IMR-90 (cell line): ENCODE measurements at regions of chr6 and their contacts with region 1.

Region 1: DNA sequence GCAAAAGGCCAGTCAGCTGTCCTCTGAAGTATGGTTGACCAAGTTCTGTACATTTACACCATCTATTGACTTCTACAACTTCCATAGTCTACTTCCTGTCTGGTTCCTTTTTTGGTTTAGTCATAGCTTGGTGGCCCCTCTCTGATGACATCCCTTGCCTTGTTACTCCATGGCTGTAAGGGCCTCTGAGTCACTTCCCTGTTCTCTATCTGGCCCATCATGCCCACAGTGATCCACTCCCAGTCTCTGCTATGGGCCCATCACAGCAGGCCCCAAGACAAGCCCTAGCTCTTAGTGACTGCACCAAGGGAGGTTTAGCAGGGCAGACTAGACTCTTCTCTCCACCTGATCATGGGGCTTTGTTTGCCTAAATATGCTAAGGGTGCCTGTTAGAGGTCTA is 441.6 kb downstream of the HACE1 start:
- DNase-seq: no peak
- ATAC-seq: no peak
- H3K4me3 ChIP-seq: no peak overlapping the region
- H3K27ac ChIP-seq: no peak overlapping the region
- H3K4me1 ChIP-seq: no peaks in the 10 kb centered on the region
- H3K27me3 ChIP-seq: no peaks in the 10 kb centered on the region
- CTCF ChIP-seq: no peak
- POLR2A ChIP-seq: no peak
- RAD21 ChIP-seq: no peak

Region 2: DNA sequence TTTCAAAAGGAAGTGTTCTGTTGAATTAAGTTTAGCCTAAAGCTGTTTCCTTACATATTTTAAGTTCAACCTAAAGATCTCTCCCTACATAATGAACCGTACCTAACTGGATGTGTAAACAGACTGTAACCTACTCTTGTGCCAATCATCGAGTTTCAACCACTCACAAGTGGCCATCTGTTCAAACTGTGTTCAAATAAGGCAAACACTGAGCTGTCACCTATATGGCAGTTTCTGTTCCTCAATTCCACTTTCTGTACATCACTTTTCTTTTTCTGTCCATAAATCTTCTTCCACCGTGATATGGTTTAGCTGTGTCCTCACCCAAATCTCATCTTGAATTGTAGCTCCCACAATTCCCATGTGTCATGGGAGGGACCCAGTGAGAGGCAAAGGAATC is 13.0 kb after region 1 on chr6:
- CTCF ChIA-PET with region 1: no interaction called
- POLR2A ChIA-PET with region 1: no interaction called
- dilution Hi-C with region 1: no loop called
- in situ Hi-C with region 1: no loop called
- intact Hi-C with region 1: no loop called
- DNase-seq: no peak
- ATAC-seq: no peak
- H3K4me3 ChIP-seq: no peak overlapping the region
- H3K27ac ChIP-seq: no peak overlapping the region
- H3K4me1 ChIP-seq: no peaks in the 10 kb centered on the region
- H3K27me3 ChIP-seq: no peaks in the 10 kb centered on the region
- CTCF ChIP-seq: no peak
- POLR2A ChIP-seq: no peak
- RAD21 ChIP-seq: no peak

Region 3: DNA sequence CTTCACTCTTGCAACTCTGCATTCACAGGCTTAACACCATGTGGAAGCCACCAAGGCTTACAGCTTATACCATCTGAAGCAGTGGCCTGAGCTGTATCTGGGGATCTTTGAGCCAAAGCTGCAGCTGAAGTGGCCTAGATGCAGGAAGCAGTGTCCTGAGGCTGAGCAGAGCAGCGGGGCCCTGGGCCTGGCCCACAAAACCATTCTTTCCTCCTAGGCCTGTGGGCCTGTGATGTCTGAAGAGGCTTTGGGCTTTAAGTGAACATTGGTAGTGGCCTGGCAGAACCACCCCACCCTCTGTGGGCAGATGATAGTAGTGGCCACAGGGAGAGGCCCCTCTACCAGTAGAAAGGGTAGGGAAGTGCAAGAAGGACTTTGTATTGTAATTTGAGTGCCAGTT is 991.6 kb after region 1 on chr6:
- CTCF ChIA-PET with region 1: no interaction called
- POLR2A ChIA-PET with region 1: no interaction called
- dilution Hi-C with region 1: no loop called
- in situ Hi-C with region 1: no loop called
- intact Hi-C with region 1: loop called (anchors 10 kb)
- DNase-seq: no peak
- ATAC-seq: no peak
- H3K4me3 ChIP-seq: no peak overlapping the region
- H3K27ac ChIP-seq: no peak overlapping the region
- H3K4me1 ChIP-seq: no peaks in the 10 kb centered on the region
- H3K27me3 ChIP-seq: no peaks in the 10 kb centered on the region; the same call in 1 of the 2 replicates
- CTCF ChIP-seq: no peak
- POLR2A ChIP-seq: no peak
- RAD21 ChIP-seq: no peak